CD8-positive, alpha-beta memory T cell (primary cell): ENCODE measurements at regions of chr2 and their contacts with region 1.

Region 1: GRCh38 chr2:160406591-160407392 is 86.8 kb downstream of the RBMS1 start:
- DNase-seq: peak; percentile 65 to 90 (median 84)
- H3K4me3 ChIP-seq: peak overlapping the region; percentile 86
- H3K4me3 Mint-ChIP-seq: peak overlapping the region; percentile 89 to 97 (median 93)
- H3K27ac ChIP-seq: peak overlapping the region; percentile 75
- H3K27ac Mint-ChIP-seq: peak overlapping the region; percentile 90 to 99 (median 94)
- H3K4me1 ChIP-seq: peaks cover 77% of the 10 kb centered on the region
- H3K4me1 Mint-ChIP-seq: peaks cover 79 to 90% (median 87%) of the 10 kb centered on the region in 3 donors
- H3K27me3 ChIP-seq: no peaks in the 10 kb centered on the region
- H3K27me3 Mint-ChIP-seq: no peaks in the 10 kb centered on the region

Region 2: DNA sequence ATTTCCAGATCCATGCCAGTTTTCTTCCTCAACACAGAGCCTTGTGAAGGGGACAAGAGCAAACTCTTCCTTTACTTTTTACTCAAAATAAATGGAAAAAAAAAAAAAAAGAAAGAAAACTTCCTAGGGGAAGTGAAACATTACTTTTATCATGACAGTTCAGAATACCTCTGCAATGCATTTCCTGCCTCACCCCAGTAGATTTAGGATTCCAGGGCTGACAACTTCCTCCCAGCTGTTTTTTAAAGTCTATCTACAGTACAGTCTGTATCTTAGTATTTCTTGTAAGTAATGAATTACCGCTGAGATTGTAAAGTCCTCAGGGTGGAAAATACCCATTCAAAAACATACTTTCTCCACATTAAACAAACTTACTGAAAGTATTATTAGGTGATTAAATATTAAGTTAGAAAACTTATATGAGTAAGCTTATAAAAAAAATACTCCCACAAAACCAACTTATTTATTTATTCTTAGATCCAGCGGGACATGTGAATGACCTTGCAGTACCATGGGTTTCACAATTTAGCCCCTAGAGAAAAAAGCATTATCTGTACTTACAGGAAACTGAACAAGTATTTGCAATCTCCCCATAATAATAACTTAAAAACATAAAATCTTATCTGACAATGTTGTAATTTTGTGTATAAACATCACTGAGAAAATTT is 30.9 kb before region 1 on chr2:
- CTCF ChIA-PET with region 1: no interaction called
- POLR2A ChIA-PET with region 1: no interaction called
- DNase-seq: no peak
- H3K4me3 ChIP-seq: no peak overlapping the region
- H3K4me3 Mint-ChIP-seq: peak overlapping the region in 5 of 7 donors; percentile 1 to 68 (median 57)
- H3K27ac ChIP-seq: no peak overlapping the region
- H3K27ac Mint-ChIP-seq: peak overlapping the region in 3 of 8 donors; percentile 21 to 57 (median 38)
- H3K4me1 ChIP-seq: peaks cover 71% of the 10 kb centered on the region
- H3K4me1 Mint-ChIP-seq: peaks cover 87 to 100% (median 98%) of the 10 kb centered on the region in 3 donors
- H3K27me3 ChIP-seq: no peaks in the 10 kb centered on the region
- H3K27me3 Mint-ChIP-seq: no peaks in the 10 kb centered on the region

Region 3: GRCh38 chr2:160394153-160394552 is 12.6 kb before region 1 on chr2:
- CTCF ChIA-PET with region 1: interaction called, 6 read pairs
- POLR2A ChIA-PET with region 1: interaction called, 11 read pairs
- DNase-seq: peak in 2 of 5 donors; percentile 43 to 64
- H3K4me3 ChIP-seq: no peak overlapping the region
- H3K4me3 Mint-ChIP-seq: peak overlapping the region; percentile 39 to 81 (median 70)
- H3K27ac ChIP-seq: no peak overlapping the region
- H3K27ac Mint-ChIP-seq: peak overlapping the region; percentile 55 to 92 (median 86)
- H3K4me1 ChIP-seq: peaks cover 86% of the 10 kb centered on the region
- H3K4me1 Mint-ChIP-seq: peaks cover 60 to 70% (median 65%) of the 10 kb centered on the region in 3 donors
- H3K27me3 ChIP-seq: no peaks in the 10 kb centered on the region
- H3K27me3 Mint-ChIP-seq: peaks cover 0 to 2% of the 10 kb centered on the region in 2 donors

Region 4: GRCh38 chr2:160533476-160533875 is 126.7 kb after region 1 on chr2:
- CTCF ChIA-PET with region 1: no interaction called
- POLR2A ChIA-PET with region 1: no interaction called
- DNase-seq: no peak
- H3K4me3 ChIP-seq: no peak overlapping the region
- H3K4me3 Mint-ChIP-seq: no peak overlapping the region
- H3K27ac ChIP-seq: no peak overlapping the region
- H3K27ac Mint-ChIP-seq: no peak overlapping the region
- H3K4me1 ChIP-seq: no peaks in the 10 kb centered on the region
- H3K4me1 Mint-ChIP-seq: peaks cover 0 to 3% (median 0%) of the 10 kb centered on the region in 3 donors
- H3K27me3 ChIP-seq: no peaks in the 10 kb centered on the region
- H3K27me3 Mint-ChIP-seq: peaks cover 0 to 4% of the 10 kb centered on the region in 2 donors